Activated CD4-positive, alpha-beta T cell treated with anti-CD3 and anti-CD28 coated beads for 36 hours (primary cell): ENCODE measurements at regions of chr17 and their contacts with region 1.

Region 1: DNA sequence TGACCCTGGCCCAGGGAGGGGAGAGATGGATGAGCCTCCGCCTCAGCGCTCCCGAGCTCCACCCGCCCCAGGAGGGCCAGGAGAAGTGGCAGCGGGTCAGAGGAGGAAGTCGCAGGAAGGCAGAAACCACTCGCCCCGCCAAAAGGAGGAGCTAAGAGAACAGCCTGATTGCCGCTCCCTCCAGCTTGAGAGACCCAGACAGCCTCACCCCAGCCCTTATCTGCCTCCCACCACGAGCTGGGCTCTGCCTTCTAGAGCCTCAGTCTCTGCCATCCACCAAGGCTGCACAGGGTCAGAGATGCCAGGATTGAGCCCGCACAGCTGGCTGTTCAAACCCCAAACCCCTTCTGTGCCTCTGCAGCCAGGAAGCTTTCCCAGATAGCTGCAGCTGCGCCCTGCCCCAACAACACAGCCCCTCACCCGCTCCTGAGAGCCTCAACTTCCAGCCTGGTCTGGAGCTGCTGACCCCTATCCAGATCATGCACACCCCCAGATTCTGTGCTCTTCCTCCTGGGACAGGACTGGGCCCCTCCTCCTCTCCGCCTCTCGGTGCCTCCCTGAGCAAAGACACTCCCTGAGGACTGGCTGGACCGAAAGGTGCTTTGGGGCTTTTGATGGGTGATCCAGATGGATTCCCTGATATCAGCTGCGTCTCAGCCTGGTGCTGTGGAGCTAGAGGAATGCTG is 1.0 kb upstream of the ATP2A3 start:
- DNase-seq: peak; percentile 86
- ATAC-seq: peak; percentile 75
- H3K4me3 Mint-ChIP-seq: peak overlapping the region; percentile 81
- H3K27ac Mint-ChIP-seq: peak overlapping the region; percentile 93
- H3K4me1 Mint-ChIP-seq: peaks cover 40% of the 10 kb centered on the region
- H3K27me3 Mint-ChIP-seq: no peaks in the 10 kb centered on the region

Region 2: GRCh38 chr17:3048767-3049471 is 916.3 kb before region 1 on chr17:
- CTCF ChIA-PET with region 1: no interaction called
- POLR2A ChIA-PET with region 1: no interaction called
- intact Hi-C with region 1: loop called in 1 of 2 experiments (anchors 5 kb)
- DNase-seq: peak; percentile 98
- ATAC-seq: peak; percentile 99
- H3K4me3 Mint-ChIP-seq: peak overlapping the region; percentile 86
- H3K27ac Mint-ChIP-seq: peak overlapping the region; percentile 83
- H3K4me1 Mint-ChIP-seq: peaks cover 4% of the 10 kb centered on the region
- H3K27me3 Mint-ChIP-seq: no peaks in the 10 kb centered on the region

Region 3: DNA sequence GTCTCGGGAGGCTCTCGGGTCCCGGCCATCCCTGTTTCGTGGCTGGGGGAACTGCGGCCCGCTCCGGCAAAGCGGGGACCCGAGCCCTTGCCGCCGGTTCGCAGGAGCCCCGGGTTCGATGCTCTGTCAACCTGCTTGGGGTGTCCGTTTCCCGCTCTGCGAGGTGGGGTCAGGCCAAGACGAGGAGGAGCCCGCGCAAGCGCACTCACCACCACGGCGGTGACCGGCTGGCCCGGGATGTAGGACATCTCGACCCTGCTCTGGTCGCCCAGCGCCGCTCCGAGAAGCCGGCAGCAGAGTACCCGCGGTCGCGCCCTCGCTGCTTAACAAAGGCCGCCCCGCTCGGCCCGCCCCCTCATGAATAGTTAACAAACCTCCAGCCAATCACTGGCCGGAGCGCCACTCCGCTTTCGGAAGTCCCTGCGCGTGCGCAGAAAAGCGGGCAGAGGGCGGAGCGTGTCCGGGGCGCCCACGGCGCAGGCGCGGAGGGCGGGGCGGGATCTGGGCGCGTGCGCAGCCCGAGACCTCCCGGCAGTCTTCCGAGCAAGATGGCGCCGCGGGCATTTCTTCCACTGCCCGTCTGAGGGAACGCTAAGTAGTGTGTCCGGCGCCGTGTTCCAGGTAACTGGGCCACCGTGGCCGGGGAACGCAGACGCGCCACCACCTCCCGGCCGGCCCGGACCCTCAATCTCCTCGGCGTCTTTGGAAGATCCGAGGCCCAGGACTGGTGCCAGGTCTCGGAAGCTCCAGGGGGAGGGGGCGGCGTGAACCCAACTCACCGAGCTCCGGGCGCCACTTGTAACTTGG is 296.8 kb before region 1 on chr17 and contains the starts of genes EMC6 and TAX1BP3:
- CTCF ChIA-PET with region 1: no interaction called
- POLR2A ChIA-PET with region 1: no interaction called
- intact Hi-C with region 1: no loop called
- DNase-seq: peak; percentile 99
- ATAC-seq: peak; percentile 94
- H3K4me3 Mint-ChIP-seq: peak within 1 kb of the TSS; percentile 97
- H3K27ac Mint-ChIP-seq: peak within 1 kb of the TSS; percentile 94
- H3K4me1 Mint-ChIP-seq: peaks cover 21% of the 10 kb centered on the region
- H3K27me3 Mint-ChIP-seq: no peaks in the 10 kb centered on the region
- total RNA-seq, gene EMC6: 43.6 to 44.3 TPM
- total RNA-seq, gene TAX1BP3: 12.0 to 14.6 TPM

Region 4: DNA sequence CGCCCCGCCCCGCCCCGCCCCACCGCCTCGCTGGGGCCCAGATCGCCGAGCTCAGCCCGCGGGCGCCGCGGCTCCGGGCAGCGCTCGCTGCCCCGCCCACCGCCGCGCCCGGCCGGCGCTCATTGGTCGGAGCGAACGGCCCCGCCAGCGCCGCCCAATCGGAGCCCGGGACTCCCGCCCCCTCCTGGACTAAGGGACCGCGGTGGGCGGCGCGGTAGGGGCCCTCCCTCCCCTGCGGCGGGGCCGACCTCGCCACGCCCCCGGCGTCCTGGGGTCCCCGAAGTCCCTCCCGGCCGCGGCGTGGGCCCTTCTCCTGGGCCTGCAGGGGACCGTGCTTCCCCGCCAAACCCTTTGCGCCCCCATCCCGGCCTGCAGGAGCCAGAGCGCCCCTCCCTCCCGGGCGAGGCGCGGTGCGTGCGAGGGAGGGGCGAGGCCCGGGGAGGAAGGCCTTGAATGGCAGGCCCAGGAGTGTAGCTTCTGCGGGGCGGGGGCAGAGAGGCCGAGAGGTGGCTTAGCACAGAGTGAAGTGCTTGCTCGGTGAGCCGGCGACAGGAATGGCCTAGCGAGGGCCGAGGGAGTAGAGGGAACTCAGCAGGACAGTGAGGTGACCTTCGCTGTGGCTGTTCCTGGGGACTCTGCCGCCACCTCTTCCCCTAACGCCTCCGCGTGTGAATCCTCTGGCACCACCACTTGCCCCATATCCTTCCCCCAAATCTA is 72.1 kb before region 1 on chr17 and contains the start of gene CAMKK1:
- CTCF ChIA-PET with region 1: interaction called, 3 read pairs
- POLR2A ChIA-PET with region 1: interaction called, 3 read pairs
- intact Hi-C with region 1: loop called in 1 of 2 experiments (anchors 1 kb)
- DNase-seq: peak; percentile 94
- ATAC-seq: peak; percentile 88
- H3K4me3 Mint-ChIP-seq: peak within 1 kb of the TSS; percentile 76
- H3K27ac Mint-ChIP-seq: peak within 1 kb of the TSS; percentile 77
- H3K4me1 Mint-ChIP-seq: peaks cover 36% of the 10 kb centered on the region
- H3K27me3 Mint-ChIP-seq: no peaks in the 10 kb centered on the region
- total RNA-seq, gene CAMKK1: 4.5 to 5.4 TPM

Region 5: GRCh38 chr17:3944485-3945388 is 20.5 kb before region 1 on chr17:
- CTCF ChIA-PET with region 1: interaction called, 4 read pairs
- POLR2A ChIA-PET with region 1: interaction called, 4 read pairs
- intact Hi-C with region 1: loop called in 1 of 2 experiments (anchors 1 kb)
- DNase-seq: peak; percentile 72
- ATAC-seq: peak; percentile 88
- H3K4me3 Mint-ChIP-seq: no peak overlapping the region
- H3K27ac Mint-ChIP-seq: no peak overlapping the region
- H3K4me1 Mint-ChIP-seq: no peaks in the 10 kb centered on the region
- H3K27me3 Mint-ChIP-seq: no peaks in the 10 kb centered on the region

Region 6: DNA sequence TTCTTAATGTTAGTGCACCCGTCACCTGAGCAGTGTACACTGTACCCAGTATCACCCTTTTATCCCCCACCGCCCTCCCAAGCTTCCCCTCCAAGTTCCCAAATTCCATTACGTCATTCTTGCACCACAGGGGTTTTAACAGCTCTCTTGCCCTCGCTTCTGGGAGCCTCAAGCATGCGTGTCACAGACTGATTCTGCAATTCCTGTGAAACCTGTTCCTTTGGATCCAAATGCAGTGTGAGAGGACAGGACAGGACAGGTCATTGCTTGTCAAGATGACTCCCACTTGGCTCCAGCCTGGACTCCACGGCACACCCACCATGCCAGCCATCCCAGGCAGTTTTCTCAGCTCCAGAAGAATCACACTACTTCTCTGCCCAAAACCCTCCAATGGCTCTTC is 221.8 kb after region 1 on chr17:
- CTCF ChIA-PET with region 1: no interaction called
- POLR2A ChIA-PET with region 1: no interaction called
- intact Hi-C with region 1: no loop called
- DNase-seq: no peak
- ATAC-seq: no peak
- H3K4me3 Mint-ChIP-seq: no peak overlapping the region
- H3K27ac Mint-ChIP-seq: no peak overlapping the region
- H3K4me1 Mint-ChIP-seq: peaks cover 8% of the 10 kb centered on the region
- H3K27me3 Mint-ChIP-seq: no peaks in the 10 kb centered on the region